Ovary (tissue), 10 donors: ENCODE measurements at regions of chr16 and their contacts with region 1.

Region 1: GRCh38 chr16:58352690-58353089 is 39.6 kb upstream of the GINS3 start:
- DNase-seq: no peak
- H3K4me3 ChIP-seq: no peak overlapping the region
- H3K27ac ChIP-seq: no peak overlapping the region
- H3K4me1 ChIP-seq: no peaks in the 10 kb centered on the region
- H3K27me3 ChIP-seq: no peaks in the 10 kb centered on the region
- CTCF ChIP-seq: no peak
- EP300 ChIP-seq: no peak
- POLR2A ChIP-seq: no peak

Region 2: DNA sequence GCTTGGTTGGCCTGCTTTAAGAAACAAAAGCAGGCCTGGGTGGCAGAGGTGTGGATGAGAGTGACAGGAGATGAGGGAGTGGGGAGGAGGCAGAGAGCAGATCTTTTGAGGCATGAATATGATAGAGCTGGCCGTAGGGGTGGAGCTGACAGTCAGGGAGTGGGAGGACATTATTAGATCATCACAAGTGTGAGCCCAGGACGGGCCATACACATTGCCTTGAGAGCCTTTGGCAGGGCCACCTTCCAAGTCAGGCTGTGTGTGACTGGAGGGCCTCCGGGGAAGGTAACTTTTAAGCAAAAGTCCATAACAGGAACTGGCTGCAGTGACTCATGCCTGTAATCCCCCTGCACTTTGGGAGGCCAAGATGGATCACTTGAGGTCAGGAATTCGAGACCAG is 65.9 kb after region 1 on chr16:
- intact Hi-C with region 1: loop called in 1 of 4 experiments (anchors 10 kb)
- DNase-seq: no peak
- H3K4me3 ChIP-seq: no peak overlapping the region
- H3K27ac ChIP-seq: no peak overlapping the region
- H3K4me1 ChIP-seq: no peaks in the 10 kb centered on the region
- H3K27me3 ChIP-seq: no peaks in the 10 kb centered on the region
- CTCF ChIP-seq: no peak
- EP300 ChIP-seq: no peak
- POLR2A ChIP-seq: no peak